ENCODE measurements at regions of chr22 and their contacts with region 1.

Region 1: GRCh38 chr22:38872172-38872830 is at the start of gene CBX6:
- DNase-seq: peak; percentile 98
- ATAC-seq: peak; percentile 90
- total RNA-seq, gene CBX6: 39.3 TPM

Region 2: DNA sequence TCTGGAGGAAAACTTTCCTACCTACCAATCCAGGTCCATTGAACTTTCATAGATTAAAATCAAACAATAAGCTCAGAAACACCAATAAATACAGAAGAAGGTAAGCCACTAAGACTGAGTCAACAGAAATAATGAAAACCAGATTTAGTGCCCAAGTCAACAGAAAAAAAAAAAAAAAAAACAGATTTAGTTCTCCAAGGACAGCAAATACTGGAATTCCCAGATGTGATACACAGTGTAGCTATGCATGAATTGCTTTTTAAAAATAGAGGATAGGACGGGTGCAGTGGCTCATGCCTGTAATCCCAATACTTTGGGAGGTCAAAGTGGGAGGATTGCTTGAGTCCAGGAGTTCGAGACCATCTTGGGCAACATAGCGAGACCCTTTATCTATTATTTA is 318.0 kb before region 1 on chr22:
- intact Hi-C with region 1: no loop called
- DNase-seq: no peak
- ATAC-seq: no peak

Region 3: GRCh38 chr22:38766076-38766777 is 106.1 kb before region 1 on chr22:
- intact Hi-C with region 1: loop called (anchors 5 kb)
- DNase-seq: peak; percentile 65
- ATAC-seq: peak; percentile 45

Region 4: GRCh38 chr22:38817196-38817595 is 55.1 kb before region 1 on chr22:
- intact Hi-C with region 1: no loop called
- DNase-seq: no peak
- ATAC-seq: no peak

Region 5: GRCh38 chr22:38927033-38927781 is 54.9 kb after region 1 on chr22:
- intact Hi-C with region 1: loop called (anchors 1 kb)
- DNase-seq: peak; percentile 87
- ATAC-seq: peak; percentile 78

Region 6: DNA sequence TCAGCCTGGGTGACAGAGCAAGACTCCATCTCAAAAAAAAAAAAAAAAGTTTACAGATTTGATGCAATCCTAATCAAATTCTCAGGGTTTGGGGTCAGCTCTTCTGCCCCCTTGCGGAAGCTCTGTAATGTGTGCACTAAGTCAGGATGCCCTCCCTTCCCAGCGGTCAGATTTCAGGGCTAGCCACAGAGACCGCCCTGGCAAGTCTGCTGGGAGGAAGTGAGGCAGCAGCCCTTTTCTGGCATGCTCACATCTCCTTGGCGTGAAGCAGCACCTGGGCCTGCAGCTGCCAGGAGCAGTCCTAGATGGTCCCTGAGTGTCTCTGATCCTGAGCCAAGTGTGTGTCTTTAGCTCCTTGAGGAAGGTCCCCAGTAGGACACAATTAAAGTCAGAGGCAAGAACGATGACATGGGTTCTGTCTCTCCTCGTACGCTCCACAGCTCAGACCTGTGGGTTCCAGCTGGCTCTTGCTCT is 130.9 kb after region 1 on chr22:
- intact Hi-C with region 1: loop called (anchors 1 kb)
- DNase-seq: peak; percentile 85
- ATAC-seq: peak; percentile 89

Region 7: DNA sequence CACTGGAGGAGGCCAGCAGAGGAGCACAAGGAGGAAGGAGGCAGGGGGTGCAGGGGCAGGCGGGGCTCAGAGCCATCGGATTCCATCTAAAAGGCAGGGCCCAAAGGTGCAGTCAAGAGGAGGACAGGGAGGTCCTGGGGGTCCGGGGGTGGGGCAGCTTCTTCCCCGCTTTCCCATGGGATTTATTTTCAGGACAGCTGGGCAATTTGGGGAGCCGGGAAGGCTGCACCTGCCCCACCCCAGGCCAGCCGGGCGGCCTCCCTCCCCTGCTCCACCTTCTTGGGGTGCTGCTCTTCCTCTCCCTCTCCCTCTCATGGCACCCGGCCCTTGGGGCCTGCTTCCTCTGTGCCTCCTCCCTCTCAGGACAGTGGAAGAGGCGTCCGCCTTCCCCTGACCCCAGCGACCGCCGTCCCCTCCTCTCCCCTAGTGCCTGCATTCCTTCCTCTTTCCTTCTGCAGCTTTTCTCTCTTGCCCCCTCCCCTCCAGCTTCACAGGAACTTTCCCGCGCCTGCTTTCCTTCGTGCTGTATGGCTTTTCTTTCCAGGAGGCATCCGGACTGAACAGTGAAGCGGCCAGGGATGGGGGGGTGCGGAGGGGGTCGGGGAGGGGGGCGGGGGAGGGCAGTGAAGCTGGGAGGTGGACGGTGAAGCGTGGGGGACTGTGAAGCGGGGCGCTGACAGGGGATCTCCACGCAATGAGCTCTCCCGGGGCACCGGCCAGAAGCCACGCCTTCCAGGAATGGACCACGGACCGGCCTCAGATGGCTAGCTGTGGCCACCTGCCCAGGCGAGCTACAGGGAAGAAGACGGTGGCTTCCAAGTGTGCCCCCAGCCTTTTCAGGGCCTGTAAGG is 251.7 kb after region 1 on chr22:
- intact Hi-C with region 1: loop called (anchors 2 kb)
- DNase-seq: no peak
- ATAC-seq: no peak

Region 8: GRCh38 chr22:39319270-39320022 is 447.1 kb after region 1 on chr22 and contains the start of gene RPL3:
- intact Hi-C with region 1: loop called (anchors 5 kb)
- DNase-seq: peak; percentile 99
- ATAC-seq: peak; percentile 93
- total RNA-seq, gene RPL3: 355 TPM

Measured in Right ventricle myocardium inferior (tissue), 1 donor.